ENCODE measurements at regions of chr4 and their contacts with region 1.

Region 1: DNA sequence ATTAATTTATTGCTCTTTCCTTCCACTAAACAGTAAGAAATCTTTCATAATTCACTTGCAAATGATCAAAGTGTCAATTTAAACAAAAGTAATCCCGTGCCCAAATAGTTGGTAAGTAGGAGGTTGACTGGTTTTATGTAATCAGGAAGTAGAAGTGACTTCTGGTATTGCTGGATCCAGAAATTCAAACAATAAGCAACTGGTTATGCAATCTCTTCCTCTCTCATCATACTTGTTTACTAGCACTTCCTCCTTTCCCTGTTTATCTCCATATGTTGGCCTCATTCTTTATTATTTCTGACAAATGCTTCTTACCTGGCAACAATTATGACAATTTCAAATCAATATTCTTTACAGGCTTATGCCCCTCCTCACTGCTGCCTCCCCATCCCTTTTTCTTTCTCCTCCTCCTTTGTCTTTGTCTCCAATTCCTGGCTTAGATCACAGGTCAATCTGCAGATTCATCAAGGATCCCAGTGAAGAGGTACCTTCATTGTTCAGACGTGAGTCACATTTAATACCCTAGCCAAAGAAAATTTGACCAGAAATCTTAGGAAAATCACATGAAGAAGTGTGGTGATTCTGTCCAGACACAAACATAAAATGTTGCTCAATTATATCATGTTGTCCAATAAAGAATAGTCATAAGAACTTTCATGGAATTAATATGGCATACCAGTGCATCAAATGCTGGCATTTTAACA is 323.2 kb upstream of the PCDH7 start:
- DNase-seq: no peak
- H3K4me3 ChIP-seq: no peak overlapping the region
- H3K4me3 Mint-ChIP-seq: no peak overlapping the region
- H3K27ac Mint-ChIP-seq: no peak overlapping the region
- H3K4me1 ChIP-seq: peaks cover 38% of the 10 kb centered on the region
- H3K4me1 Mint-ChIP-seq: peaks cover 28% of the 10 kb centered on the region
- H3K27me3 ChIP-seq: no peaks in the 10 kb centered on the region
- H3K27me3 Mint-ChIP-seq: no peaks in the 10 kb centered on the region
- CTCF ChIP-seq: no peak

Region 2: GRCh38 chr4:30600246-30601017 is 203.5 kb after region 1 on chr4:
- CTCF ChIA-PET with region 1: no interaction called
- POLR2A ChIA-PET with region 1: no interaction called
- intact Hi-C with region 1: loop called (anchors 10 kb)
- DNase-seq: no peak
- H3K4me3 ChIP-seq: no peak overlapping the region
- H3K4me3 Mint-ChIP-seq: no peak overlapping the region
- H3K27ac Mint-ChIP-seq: no peak overlapping the region
- H3K4me1 ChIP-seq: peaks cover 3% of the 10 kb centered on the region; the same call in 1 of the 2 replicates
- H3K4me1 Mint-ChIP-seq: peaks cover 2% of the 10 kb centered on the region
- H3K27me3 ChIP-seq: no peaks in the 10 kb centered on the region
- H3K27me3 Mint-ChIP-seq: no peaks in the 10 kb centered on the region
- CTCF ChIP-seq: no peak